Calu3 (cell line): ENCODE measurements at regions of chr9 and their contacts with region 1.

Region 1: DNA sequence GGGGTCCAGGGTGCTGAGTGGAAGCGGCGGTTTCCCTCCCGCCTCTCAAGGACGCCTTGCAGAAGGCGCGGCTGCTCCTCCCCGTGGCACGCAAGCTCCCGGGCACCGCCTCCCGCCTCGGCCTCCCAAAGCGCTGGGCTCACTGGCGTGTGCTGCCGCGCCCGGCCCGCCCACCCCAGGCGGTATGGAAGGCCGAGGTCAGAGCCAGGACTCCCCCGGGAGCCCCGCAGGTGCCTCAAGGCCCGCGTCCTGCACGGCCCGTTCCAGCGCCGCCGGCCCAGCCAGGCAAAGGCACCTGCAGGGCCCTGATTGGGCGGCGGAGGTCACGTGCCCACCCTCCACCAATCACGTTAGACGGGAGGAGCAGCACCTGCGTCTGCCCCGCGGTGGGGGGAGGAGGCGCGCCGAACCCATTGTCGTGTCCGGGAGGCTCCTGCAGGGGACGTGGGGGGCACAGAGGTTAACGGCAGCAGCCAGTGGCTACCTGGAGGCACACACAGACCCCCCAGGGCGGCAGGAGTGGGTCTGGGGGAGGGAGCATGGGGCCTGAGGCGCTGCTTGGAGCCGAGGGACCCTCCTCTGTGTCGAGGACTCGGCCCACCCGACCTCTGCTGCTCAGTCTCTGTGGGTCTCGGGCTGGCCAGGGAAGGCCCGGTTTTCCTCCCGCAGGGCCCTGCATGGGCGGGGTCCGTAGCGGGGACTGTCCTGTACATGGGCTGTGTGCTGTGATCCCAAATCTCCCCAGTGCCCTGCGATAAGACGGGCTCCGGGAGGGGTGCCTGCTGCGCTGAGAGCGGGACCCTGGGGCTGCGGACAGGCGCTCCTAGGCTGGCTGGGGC is 2.0 kb upstream of the LCN12 start:
- DNase-seq: peak; percentile 95
- H3K4me3 Mint-ChIP-seq: peak overlapping the region; percentile 76
- H3K27ac Mint-ChIP-seq: peak overlapping the region; percentile 81
- H3K4me1 Mint-ChIP-seq: peaks cover 1% of the 10 kb centered on the region
- H3K27me3 Mint-ChIP-seq: no peaks in the 10 kb centered on the region
- CTCF ChIP-seq: no peak

Region 2: GRCh38 chr9:136991993-136992818 is 42.2 kb after region 1 on chr9 and contains the start of gene PAXX:
- CTCF ChIA-PET with region 1: interaction called, 15 read pairs
- intact Hi-C with region 1: no loop called
- DNase-seq: peak; percentile 93
- H3K4me3 Mint-ChIP-seq: peak within 1 kb of the TSS; percentile 82
- H3K27ac Mint-ChIP-seq: no peak within 1 kb of the TSS
- H3K4me1 Mint-ChIP-seq: no peaks in the 10 kb centered on the region
- H3K27me3 Mint-ChIP-seq: peaks cover 21% of the 10 kb centered on the region
- CTCF ChIP-seq: no peak
- total RNA-seq, gene PAXX: 38.3 and 43.7 TPM in 2 replicates

Region 3: DNA sequence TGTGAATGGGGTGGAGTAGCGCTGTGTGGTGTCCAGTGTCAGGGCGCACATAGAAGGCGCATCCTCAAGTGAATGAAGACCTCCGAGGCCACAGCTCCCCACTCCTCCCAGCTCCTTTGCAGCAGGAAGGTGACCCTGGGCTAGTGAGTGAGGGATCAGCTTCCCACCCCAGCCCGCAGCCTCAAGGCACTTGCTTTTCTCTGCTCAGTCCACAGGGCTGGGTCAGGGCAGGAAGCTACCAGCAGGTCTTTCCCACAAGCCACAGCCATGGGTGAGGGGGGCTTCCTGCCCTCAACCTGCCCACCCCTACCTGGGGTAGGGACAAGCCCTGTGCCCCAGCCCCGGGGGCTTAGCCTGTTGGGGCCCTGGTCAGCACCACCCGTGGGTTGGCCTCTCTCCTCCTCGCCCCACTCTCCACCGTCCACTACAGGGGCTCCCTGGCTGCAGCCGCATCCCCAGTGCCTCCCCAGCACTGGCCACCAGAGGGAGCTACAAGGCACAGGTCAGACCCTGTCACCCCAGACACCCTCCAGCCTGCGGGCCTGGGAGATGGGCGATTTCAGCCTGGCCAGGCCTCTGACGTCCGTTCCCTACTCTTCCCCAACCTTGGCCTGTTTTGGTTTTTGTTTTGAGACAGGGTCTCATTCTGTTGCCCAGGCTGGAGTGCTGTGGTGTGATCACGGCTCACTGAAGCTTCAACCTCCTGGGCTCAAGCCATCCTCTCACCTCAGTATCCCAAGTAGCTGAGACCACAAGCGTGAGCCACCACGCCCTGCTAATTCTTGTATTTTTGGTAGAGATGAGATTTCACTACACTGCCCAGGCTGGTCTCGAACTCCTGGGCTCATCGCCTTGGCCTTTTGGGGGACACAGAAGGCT is 79.3 kb after region 1 on chr9:
- CTCF ChIA-PET with region 1: interaction called, 47 read pairs
- intact Hi-C with region 1: loop called (anchors 2 kb)
- DNase-seq: peak; percentile 79
- H3K4me3 Mint-ChIP-seq: peak overlapping the region; percentile 63
- H3K27ac Mint-ChIP-seq: no peak overlapping the region
- H3K4me1 Mint-ChIP-seq: peaks cover under 1% of the 10 kb centered on the region
- H3K27me3 Mint-ChIP-seq: no peaks in the 10 kb centered on the region
- CTCF ChIP-seq: no peak

Region 4: GRCh38 chr9:137034863-137035761 is 85.1 kb after region 1 on chr9:
- CTCF ChIA-PET with region 1: interaction called, 47 read pairs
- intact Hi-C with region 1: loop called (anchors 2 kb)
- DNase-seq: peak; percentile 79
- H3K4me3 Mint-ChIP-seq: peak overlapping the region; percentile 55
- H3K27ac Mint-ChIP-seq: no peak overlapping the region
- H3K4me1 Mint-ChIP-seq: peaks cover 8% of the 10 kb centered on the region
- H3K27me3 Mint-ChIP-seq: no peaks in the 10 kb centered on the region
- CTCF ChIP-seq: peak; percentile 64